HepG2 (cell line): ENCODE measurements at regions of chr2 and their contacts with region 1.

Region 1: DNA sequence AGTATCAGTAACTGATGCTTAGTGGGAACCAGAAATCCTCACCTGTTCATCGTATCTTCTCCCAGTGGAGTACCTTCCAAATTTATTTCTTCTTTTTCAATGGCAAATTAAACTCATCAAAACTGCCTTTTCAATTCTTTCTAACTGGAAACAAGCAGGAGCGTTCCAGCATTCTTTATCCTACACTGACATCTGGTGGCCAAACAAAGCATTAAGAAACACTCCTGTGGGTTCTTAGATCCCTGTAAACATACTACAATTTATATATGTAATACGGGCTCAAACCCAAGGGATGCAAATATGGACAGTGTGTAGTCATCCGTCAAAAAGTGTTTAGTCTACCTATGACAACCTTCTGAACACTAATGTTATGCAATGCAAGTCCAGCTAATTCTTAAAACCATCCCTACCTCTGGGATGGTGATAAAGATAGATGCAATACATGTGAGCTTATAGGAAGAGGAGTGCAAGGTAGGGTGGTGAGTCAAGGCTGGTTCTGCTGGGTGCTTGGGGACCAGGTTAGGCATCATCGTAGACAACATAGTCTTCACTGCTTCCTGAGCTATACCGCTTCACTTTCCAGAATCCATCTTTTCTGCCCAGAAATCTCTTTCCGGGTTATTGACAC is 375.0 kb downstream of the CTNNA2 start:
- DNase-seq: peak; percentile 61
- ATAC-seq: peak; percentile 93
- H3K4me3 ChIP-seq: no peak overlapping the region
- H3K27ac ChIP-seq: no peak overlapping the region
- H3K4me1 ChIP-seq: no peaks in the 10 kb centered on the region
- H3K27me3 ChIP-seq: no peaks in the 10 kb centered on the region
- CTCF ChIP-seq: peak; percentile 83
- EP300 ChIP-seq: no peak
- POLR2A ChIP-seq: no peak
- RAD21 ChIP-seq: peak; percentile 77

Region 2: GRCh38 chr2:78682781-78683180 is 1205.1 kb before region 1 on chr2:
- CTCF ChIA-PET with region 1: no interaction called
- POLR2A ChIA-PET with region 1: no interaction called
- in situ Hi-C with region 1: no loop called
- intact Hi-C with region 1: no loop called
- DNase-seq: no peak
- ATAC-seq: no peak
- H3K4me3 ChIP-seq: no peak overlapping the region
- H3K27ac ChIP-seq: no peak overlapping the region
- H3K4me1 ChIP-seq: peaks cover 2% of the 10 kb centered on the region; the same call in 1 of the 2 replicates
- H3K27me3 ChIP-seq: peaks cover 2 to 9% of the 10 kb centered on the region in 2 experiments; a peak in 2 of 5 replicates
- CTCF ChIP-seq: no peak
- EP300 ChIP-seq: no peak
- POLR2A ChIP-seq: no peak
- RAD21 ChIP-seq: no peak

Region 3: GRCh38 chr2:78992451-78992806 is 895.4 kb before region 1 on chr2:
- CTCF ChIA-PET with region 1: interaction called, 6 read pairs
- POLR2A ChIA-PET with region 1: no interaction called
- in situ Hi-C with region 1: loop called (anchors 10 kb)
- intact Hi-C with region 1: loop called (anchors 1 kb)
- DNase-seq: peak; percentile 19
- ATAC-seq: peak; percentile 92
- H3K4me3 ChIP-seq: peak overlapping the region in 1 of 3 experiments; percentile 18; a peak in 1 of 6 replicates
- H3K27ac ChIP-seq: no peak overlapping the region
- H3K4me1 ChIP-seq: no peaks in the 10 kb centered on the region
- H3K27me3 ChIP-seq: peaks cover 6 to 52% of the 10 kb centered on the region in 2 experiments
- CTCF ChIP-seq: peak; percentile 46
- EP300 ChIP-seq: no peak
- POLR2A ChIP-seq: no peak
- RAD21 ChIP-seq: no peak

Region 4: GRCh38 chr2:79041032-79041448 is 846.8 kb before region 1 on chr2:
- CTCF ChIA-PET with region 1: interaction called, 3 read pairs
- POLR2A ChIA-PET with region 1: no interaction called
- in situ Hi-C with region 1: loop called (anchors 10 kb)
- intact Hi-C with region 1: loop called (anchors 1 kb)
- DNase-seq: peak; percentile 15
- ATAC-seq: peak; percentile 93
- H3K4me3 ChIP-seq: no peak overlapping the region
- H3K27ac ChIP-seq: no peak overlapping the region
- H3K4me1 ChIP-seq: no peaks in the 10 kb centered on the region
- H3K27me3 ChIP-seq: no peaks in the 10 kb centered on the region
- CTCF ChIP-seq: peak; percentile 58
- EP300 ChIP-seq: no peak
- POLR2A ChIP-seq: no peak
- RAD21 ChIP-seq: no peak

Region 5: DNA sequence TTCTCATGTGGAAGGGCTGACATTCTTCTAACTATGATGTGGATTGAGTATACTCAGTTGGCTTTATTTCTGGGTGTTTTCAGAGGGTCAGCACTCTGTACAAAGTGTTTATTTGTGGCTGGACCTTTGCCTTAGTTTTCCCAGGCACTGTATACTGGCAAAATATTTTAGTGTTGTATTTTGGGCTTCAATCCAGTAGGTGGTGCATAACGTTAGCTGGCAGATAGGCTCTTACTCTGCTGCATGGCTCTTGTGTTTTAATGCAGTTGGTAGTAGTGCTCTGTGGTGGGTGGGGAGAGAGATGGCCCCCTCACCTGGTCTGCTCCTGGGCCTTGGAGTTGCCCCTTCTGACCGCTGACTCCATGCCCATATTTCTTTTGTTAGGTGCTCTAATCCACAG is 652.7 kb before region 1 on chr2:
- CTCF ChIA-PET with region 1: interaction called, 5 read pairs
- POLR2A ChIA-PET with region 1: no interaction called
- in situ Hi-C with region 1: no loop called
- intact Hi-C with region 1: loop called (anchors 1 kb)
- DNase-seq: peak; percentile 18
- ATAC-seq: peak; percentile 97
- H3K4me3 ChIP-seq: no peak overlapping the region
- H3K27ac ChIP-seq: no peak overlapping the region
- H3K4me1 ChIP-seq: no peaks in the 10 kb centered on the region
- H3K27me3 ChIP-seq: no peaks in the 10 kb centered on the region
- CTCF ChIP-seq: peak; percentile 57
- EP300 ChIP-seq: no peak
- POLR2A ChIP-seq: no peak
- RAD21 ChIP-seq: 0 out of 2 replicates have a peak, but pooled peaks have one; percentile 25

Region 6: DNA sequence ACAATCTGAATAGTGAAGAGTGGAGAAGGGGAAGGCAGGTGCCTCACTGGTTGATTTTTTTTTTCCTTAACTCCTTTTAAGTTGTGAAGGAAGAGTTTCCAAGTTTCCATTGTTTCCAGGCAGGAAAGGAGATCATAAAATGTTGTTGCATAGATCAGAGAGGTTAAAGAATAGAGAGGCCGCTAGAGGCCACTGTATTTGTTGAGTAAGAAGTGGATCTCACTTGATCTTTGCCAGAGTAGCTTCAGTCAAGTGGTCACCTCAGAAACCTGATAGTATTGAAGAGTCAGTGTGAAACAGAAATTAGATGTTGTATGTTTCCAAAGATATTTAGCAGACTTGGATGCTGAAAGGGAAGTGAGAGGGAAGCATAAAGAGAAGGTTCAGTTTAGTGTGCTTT is 357.4 kb before region 1 on chr2:
- CTCF ChIA-PET with region 1: no interaction called
- POLR2A ChIA-PET with region 1: no interaction called
- in situ Hi-C with region 1: no loop called
- intact Hi-C with region 1: loop called (anchors 1 kb)
- DNase-seq: peak; percentile 20
- ATAC-seq: peak; percentile 90
- H3K4me3 ChIP-seq: no peak overlapping the region
- H3K27ac ChIP-seq: no peak overlapping the region
- H3K4me1 ChIP-seq: no peaks in the 10 kb centered on the region
- H3K27me3 ChIP-seq: no peaks in the 10 kb centered on the region
- CTCF ChIP-seq: peak; percentile 46
- EP300 ChIP-seq: no peak
- POLR2A ChIP-seq: no peak
- RAD21 ChIP-seq: no peak

Region 7: GRCh38 chr2:79874015-79874414 is 13.8 kb before region 1 on chr2:
- CTCF ChIA-PET with region 1: no interaction called
- POLR2A ChIA-PET with region 1: no interaction called
- in situ Hi-C with region 1: no loop called
- intact Hi-C with region 1: no loop called
- DNase-seq: no peak
- ATAC-seq: no peak
- H3K4me3 ChIP-seq: no peak overlapping the region
- H3K27ac ChIP-seq: no peak overlapping the region
- H3K4me1 ChIP-seq: no peaks in the 10 kb centered on the region
- H3K27me3 ChIP-seq: no peaks in the 10 kb centered on the region
- CTCF ChIP-seq: no peak
- EP300 ChIP-seq: no peak
- POLR2A ChIP-seq: no peak
- RAD21 ChIP-seq: no peak